CD4-positive, alpha-beta memory T cell (primary cell): ENCODE measurements at regions of chr1 and their contacts with region 1.

Region 1: DNA sequence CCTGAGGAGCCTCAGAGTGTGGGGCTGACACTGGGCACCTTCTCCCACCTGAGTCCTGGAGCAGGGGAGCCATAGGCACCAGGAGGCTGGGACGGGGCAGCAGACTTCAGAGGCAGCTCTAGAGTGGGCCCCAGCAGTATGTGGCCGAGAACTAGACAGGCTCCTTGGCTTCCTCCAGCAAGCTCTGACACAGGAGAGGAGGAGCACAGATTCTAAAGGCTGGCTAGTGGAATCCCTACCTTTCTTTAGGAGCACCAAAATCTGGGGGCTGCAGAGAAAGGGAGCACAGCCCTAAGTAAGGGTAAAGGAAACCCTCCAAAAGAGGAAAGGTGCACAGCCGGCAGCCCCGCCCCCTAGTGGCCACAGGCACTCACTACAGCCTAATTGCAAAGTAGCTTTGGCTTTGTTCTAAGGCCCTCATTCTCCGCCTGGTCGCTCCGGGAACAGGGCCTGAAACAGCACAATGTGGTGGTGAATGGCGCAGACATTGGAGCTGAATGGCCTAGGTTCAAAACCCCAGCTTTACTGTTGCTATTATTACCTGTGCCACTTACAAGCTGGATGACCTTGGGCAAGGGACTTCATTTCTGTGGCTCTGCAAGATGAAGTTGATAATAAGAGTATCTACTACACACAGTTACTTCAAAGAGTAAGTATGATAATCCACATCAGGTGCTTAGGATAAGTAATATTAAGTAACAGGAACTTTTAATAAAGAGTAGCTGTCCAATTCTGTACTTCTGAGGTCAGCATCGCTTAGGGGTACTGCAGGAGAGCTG is 8.8 kb upstream of the GUCA2A start:
- DNase-seq: peak; percentile 46 to 60 (median 52)
- H3K4me3 ChIP-seq: no peak overlapping the region
- H3K4me3 Mint-ChIP-seq: no peak overlapping the region
- H3K27ac ChIP-seq: no peak overlapping the region
- H3K27ac Mint-ChIP-seq: peak overlapping the region in 2 of 7 donors; percentile 45 to 55
- H3K4me1 ChIP-seq: no peaks in the 10 kb centered on the region
- H3K4me1 Mint-ChIP-seq: peaks cover 0 to 4% (median 1%) of the 10 kb centered on the region in 4 donors
- H3K27me3 ChIP-seq: no peaks in the 10 kb centered on the region
- H3K27me3 Mint-ChIP-seq: no peaks in the 10 kb centered on the region

Region 2: DNA sequence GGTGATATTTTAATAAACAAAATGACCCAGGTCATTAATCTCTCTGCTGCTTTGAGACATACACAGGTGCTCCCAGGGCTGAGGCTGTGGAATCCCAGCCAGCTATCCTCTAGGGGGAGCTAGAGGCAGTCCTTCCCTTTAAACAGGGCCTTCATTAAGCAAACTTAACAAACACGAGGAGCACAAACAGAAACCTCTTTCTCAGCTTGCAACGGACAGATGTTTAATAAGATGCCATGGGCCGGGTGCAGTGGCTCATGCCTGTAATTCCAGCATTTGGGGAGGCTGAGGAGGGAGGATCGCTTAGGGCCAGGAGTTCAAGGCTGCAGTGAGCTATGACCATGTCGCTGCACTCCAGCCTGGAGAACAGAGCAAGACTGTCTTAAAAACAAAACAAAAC is 361.3 kb before region 1 on chr1:
- CTCF ChIA-PET with region 1: interaction called, 10 read pairs
- POLR2A ChIA-PET with region 1: no interaction called
- intact Hi-C with region 1: no loop called
- DNase-seq: peak; percentile 49 to 64 (median 60)
- H3K4me3 ChIP-seq: no peak overlapping the region
- H3K4me3 Mint-ChIP-seq: peak overlapping the region in 6 of 8 donors; percentile 12 to 51 (median 39)
- H3K27ac ChIP-seq: no peak overlapping the region
- H3K27ac Mint-ChIP-seq: peak overlapping the region in 4 of 7 donors; percentile 5 to 32 (median 20)
- H3K4me1 ChIP-seq: peaks cover 25% of the 10 kb centered on the region
- H3K4me1 Mint-ChIP-seq: peaks cover 27 to 51% (median 30%) of the 10 kb centered on the region in 4 donors
- H3K27me3 ChIP-seq: no peaks in the 10 kb centered on the region
- H3K27me3 Mint-ChIP-seq: no peaks in the 10 kb centered on the region

Region 3: DNA sequence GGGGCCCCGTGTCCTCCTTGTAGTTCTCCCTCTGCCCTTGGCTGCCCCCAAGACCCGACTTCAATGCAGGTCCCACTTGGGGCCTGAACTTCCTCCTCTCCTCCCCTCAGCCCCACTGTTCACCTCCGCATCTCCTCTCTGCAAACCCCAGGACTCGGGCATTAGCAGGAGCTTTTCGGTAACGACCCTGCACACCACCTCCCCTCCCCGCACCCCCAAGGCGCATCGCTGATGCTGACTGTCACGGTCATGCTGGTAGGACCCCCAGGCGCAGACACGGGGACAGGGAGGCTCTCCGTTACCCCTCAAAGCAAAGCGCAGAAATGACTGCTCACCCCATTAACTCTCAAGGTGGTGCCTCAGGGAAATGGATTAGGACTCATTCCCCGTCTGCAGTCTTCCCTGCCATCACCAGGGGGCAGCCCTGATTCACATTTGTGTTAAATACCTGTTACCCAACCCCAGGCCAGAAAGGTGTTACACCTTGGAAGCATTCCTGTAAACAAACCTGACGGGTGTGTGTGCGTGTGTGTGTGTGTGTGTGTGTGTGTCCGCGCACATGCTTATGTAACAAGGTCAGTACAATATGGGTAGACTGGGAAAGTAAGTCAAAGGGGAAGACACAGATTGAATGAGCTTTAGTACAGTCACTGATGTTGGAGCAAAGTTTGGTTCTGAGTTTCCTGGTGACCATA is 26.6 kb before region 1 on chr1:
- CTCF ChIA-PET with region 1: interaction called, 9 read pairs
- POLR2A ChIA-PET with region 1: no interaction called
- intact Hi-C with region 1: loop called (anchors 1 kb)
- DNase-seq: peak; percentile 56 to 72 (median 62)
- H3K4me3 ChIP-seq: no peak overlapping the region
- H3K4me3 Mint-ChIP-seq: no peak overlapping the region
- H3K27ac ChIP-seq: no peak overlapping the region
- H3K27ac Mint-ChIP-seq: no peak overlapping the region
- H3K4me1 ChIP-seq: no peaks in the 10 kb centered on the region
- H3K4me1 Mint-ChIP-seq: peaks cover 2 to 7% (median 3%) of the 10 kb centered on the region in 4 donors
- H3K27me3 ChIP-seq: no peaks in the 10 kb centered on the region
- H3K27me3 Mint-ChIP-seq: peaks cover 10 to 16% of the 10 kb centered on the region in 2 donors

Region 4: GRCh38 chr1:42157667-42158066 is 15.7 kb before region 1 on chr1:
- CTCF ChIA-PET with region 1: interaction called, 52 read pairs
- POLR2A ChIA-PET with region 1: no interaction called
- intact Hi-C with region 1: no loop called
- DNase-seq: no peak
- H3K4me3 ChIP-seq: no peak overlapping the region
- H3K4me3 Mint-ChIP-seq: no peak overlapping the region
- H3K27ac ChIP-seq: no peak overlapping the region
- H3K27ac Mint-ChIP-seq: peak overlapping the region in 2 of 7 donors; percentile 14 to 88
- H3K4me1 ChIP-seq: no peaks in the 10 kb centered on the region
- H3K4me1 Mint-ChIP-seq: peaks cover 4 to 9% (median 6%) of the 10 kb centered on the region in 4 donors
- H3K27me3 ChIP-seq: no peaks in the 10 kb centered on the region
- H3K27me3 Mint-ChIP-seq: peaks cover under 1 to 5% of the 10 kb centered on the region in 2 donors

Region 5: DNA sequence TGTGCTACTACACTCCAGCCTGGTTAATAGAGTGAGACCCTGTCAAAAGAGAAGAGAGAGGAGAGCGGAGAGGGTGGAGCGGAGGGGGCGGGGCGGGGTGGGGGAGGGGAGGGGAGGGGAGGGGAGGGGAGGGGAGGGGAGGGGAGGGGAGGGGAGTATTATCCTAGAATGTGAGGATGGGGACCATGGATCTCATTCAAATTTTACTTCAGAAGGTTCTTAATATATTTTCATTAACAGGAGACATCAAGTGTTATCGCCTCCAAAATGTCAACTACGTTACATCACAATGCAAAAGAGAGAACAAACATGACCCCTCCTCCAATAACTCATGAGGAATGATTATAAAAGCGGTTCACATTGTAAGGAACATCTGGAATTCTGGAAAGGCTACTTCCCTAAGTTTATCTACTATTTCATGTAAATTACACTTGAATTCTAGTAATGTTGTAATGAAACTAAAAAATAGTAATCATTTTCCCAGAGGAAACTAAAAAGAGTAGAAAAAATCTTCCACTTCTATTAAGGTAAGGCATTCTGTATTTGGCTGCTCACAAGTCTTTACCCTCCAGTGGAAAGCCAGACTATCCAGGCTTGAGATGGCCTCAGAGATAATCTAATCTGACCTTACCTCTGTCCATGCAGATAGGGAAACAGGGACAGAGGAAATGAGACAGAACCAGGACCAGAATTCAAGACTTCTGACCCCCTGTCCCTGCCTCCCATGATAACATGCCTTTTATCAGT is 10.0 kb after region 1 on chr1:
- CTCF ChIA-PET with region 1: interaction called, 13 read pairs
- POLR2A ChIA-PET with region 1: interaction called, 8 read pairs
- intact Hi-C with region 1: no loop called
- DNase-seq: no peak
- H3K4me3 ChIP-seq: no peak overlapping the region
- H3K4me3 Mint-ChIP-seq: no peak overlapping the region
- H3K27ac ChIP-seq: no peak overlapping the region
- H3K27ac Mint-ChIP-seq: peak overlapping the region in 2 of 7 donors; percentile 6 to 52
- H3K4me1 ChIP-seq: no peaks in the 10 kb centered on the region
- H3K4me1 Mint-ChIP-seq: peaks cover 0 to 4% (median 3%) of the 10 kb centered on the region in 4 donors
- H3K27me3 ChIP-seq: no peaks in the 10 kb centered on the region
- H3K27me3 Mint-ChIP-seq: no peaks in the 10 kb centered on the region

Region 6: DNA sequence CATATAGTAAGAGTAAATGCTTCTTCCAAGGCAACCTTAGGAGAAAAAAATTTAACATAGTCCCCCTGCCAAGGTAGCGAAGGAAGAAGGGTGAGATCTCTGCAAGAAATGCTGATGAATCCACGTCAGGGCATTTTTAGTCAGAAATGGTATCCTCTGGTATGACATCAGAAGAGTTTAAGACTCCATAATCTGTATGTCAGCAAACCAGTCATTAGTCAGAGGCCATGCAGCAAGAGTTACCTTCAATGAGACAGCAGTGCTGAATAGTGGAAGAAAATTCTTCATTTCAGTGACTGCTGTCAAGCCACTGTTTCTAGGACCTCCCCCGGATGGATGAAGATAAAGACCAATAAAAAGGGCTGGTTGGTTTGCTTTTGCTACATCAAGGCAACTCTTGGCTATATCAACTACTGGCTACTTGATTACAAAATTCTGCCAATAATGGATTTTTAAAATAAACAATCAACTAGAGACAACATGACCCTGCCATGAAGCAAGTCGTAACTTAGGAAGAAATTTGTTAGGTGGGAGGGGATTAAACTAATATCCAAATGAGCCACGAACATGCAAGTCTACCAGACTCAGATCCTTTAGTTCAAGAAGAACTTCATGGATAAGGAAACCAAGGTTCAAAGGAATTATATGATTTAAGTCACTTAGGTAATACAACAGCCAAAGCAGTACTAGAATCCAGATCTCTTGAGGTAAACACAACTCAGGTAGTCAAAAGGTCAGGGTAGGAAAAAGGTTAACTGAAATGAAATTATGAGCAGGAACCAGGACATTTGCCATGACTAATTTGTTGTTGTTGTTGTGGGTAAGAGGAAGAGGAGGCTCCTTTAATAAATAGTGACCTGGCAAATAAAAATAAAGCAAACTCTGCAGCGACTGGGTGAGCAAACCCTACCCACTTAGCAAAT is 16.8 kb after region 1 on chr1:
- CTCF ChIA-PET with region 1: interaction called, 16 read pairs
- POLR2A ChIA-PET with region 1: interaction called, 3 read pairs
- intact Hi-C with region 1: no loop called
- DNase-seq: no peak
- H3K4me3 ChIP-seq: no peak overlapping the region
- H3K4me3 Mint-ChIP-seq: no peak overlapping the region
- H3K27ac ChIP-seq: no peak overlapping the region
- H3K27ac Mint-ChIP-seq: peak overlapping the region in 2 of 7 donors; percentile 4 to 44
- H3K4me1 ChIP-seq: no peaks in the 10 kb centered on the region
- H3K4me1 Mint-ChIP-seq: peaks cover 0 to 10% (median 5%) of the 10 kb centered on the region in 4 donors
- H3K27me3 ChIP-seq: no peaks in the 10 kb centered on the region
- H3K27me3 Mint-ChIP-seq: no peaks in the 10 kb centered on the region

Region 7: GRCh38 chr1:42462828-42463763 is 289.8 kb after region 1 on chr1 and contains the start of gene CCDC30:
- CTCF ChIA-PET with region 1: interaction called, 3 read pairs
- POLR2A ChIA-PET with region 1: no interaction called
- intact Hi-C with region 1: loop called (anchors 5 kb)
- DNase-seq: peak; percentile 97 to 99 (median 98)
- H3K4me3 ChIP-seq: peak within 1 kb of the TSS; percentile 44
- H3K4me3 Mint-ChIP-seq: peak within 1 kb of the TSS; percentile 84 to 94 (median 86)
- H3K27ac ChIP-seq: peak within 1 kb of the TSS; percentile 74
- H3K27ac Mint-ChIP-seq: peak within 1 kb of the TSS; percentile 93 to 98 (median 97)
- H3K4me1 ChIP-seq: peaks cover 24% of the 10 kb centered on the region
- H3K4me1 Mint-ChIP-seq: peaks cover 17 to 44% (median 27%) of the 10 kb centered on the region in 4 donors
- H3K27me3 ChIP-seq: no peaks in the 10 kb centered on the region
- H3K27me3 Mint-ChIP-seq: no peaks in the 10 kb centered on the region
- total RNA-seq, gene CCDC30: 7.0 to 7.1 TPM